Activated CD4-positive, alpha-beta memory T cell treated with anti-CD3 and anti-CD28 coated beads, Interleukin-2, amount 10 ng/mL, durations not matched to agents 7 days and 5 days (primary cell): ENCODE measurements at regions of chr6 and their contacts with region 1.

Region 1: DNA sequence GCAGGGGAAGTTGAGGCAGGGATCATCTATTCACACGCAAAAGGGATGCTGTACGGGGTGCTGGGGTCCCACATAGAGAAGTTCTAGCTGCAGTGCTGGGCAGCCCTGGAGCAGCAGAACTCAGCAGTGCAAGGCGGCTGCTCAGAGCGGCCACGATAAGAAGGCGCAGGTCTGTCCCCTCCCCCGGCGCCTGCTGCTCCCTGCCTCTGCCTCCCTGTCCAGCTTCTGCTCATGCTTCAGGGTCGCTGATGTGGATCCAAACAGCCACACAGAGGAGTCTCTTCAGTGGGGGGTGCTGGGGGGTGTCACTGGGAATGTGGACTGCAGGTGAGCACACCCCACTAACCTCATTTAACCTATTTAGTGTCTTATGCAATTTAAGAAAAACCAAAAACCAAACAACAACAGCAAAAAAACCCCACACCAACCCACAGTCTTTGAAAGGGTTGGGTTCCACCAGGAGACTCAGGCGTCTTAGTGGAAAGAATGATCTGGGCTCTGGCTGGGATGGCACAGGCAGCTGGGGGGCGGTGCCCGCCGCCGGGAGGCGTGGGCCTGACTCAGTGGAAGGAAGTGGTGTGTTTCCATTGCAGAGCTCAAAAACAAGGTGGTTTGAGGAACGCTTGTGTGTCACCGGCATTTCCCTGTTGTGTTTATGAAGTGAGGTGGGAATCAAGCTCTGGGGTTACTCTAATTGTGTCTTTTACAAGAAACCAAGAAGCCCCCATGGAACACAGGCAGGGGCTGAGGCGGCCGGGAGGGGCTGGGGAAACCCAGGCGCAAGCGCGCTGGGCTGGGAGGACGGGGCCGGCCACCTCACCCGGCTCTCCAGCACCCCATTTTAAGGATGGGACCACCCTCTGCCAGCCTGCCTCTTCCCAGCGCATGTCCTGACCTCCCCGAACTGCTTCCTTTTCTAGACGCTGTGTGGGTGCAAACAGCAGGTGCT is 55.1 kb downstream of the IRF4 start:
- DNase-seq: peak; percentile 92
- H3K4me3 Mint-ChIP-seq: peak overlapping the region; percentile 64
- H3K27ac Mint-ChIP-seq: peak overlapping the region; percentile 87
- H3K4me1 Mint-ChIP-seq: peaks cover 55% of the 10 kb centered on the region
- H3K27me3 Mint-ChIP-seq: peaks cover 12% of the 10 kb centered on the region

Region 2: DNA sequence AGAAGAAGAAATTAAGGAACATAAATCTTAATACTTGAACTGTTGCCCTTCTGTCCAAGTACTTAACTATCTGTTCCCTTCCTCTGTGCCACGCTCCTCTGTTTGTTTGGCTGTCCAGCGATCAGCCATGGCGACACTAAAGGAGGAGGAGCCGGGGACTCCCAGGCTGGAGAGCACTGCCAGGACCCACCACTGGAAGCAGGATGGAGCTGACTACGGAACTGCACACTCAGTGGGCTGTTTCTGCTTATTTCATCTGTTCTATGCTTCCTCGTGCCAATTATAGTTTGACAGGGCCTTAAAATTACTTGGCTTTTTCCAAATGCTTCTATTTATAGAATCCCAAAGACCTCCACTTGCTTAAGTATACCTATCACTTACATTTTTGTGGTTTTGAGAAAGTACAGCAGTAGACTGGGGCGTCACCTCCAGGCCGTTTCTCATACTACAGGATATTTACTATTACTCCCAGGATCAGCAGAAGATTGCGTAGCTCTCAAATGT is 38.0 kb before region 1 on chr6:
- CTCF ChIA-PET with region 1: interaction called, 3 read pairs
- POLR2A ChIA-PET with region 1: interaction called, 37 read pairs
- DNase-seq: no peak
- H3K4me3 Mint-ChIP-seq: no peak overlapping the region
- H3K27ac Mint-ChIP-seq: peak overlapping the region; percentile 36
- H3K4me1 Mint-ChIP-seq: peaks cover 66% of the 10 kb centered on the region
- H3K27me3 Mint-ChIP-seq: no peaks in the 10 kb centered on the region

Region 3: DNA sequence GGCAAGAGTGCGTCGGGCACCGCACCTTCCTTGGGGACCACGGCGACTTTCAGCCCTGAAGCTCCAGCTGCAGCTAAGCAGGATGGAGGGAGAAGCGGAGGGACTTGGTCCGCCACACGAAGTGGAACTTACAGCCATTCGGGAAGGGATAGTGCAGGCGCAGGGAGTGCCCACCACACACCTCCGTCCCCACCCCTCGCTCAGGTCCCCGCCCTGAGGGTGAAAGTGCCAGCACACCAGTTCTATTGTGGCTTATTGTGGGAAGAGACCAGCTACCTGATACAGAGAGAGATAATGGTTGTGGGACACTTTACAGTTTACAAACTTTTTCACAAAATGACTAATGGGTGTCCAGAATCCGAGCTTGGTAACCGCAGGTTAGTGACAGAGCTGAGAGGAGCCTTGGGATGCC is 21.0 kb after region 1 on chr6:
- CTCF ChIA-PET with region 1: interaction called, 6 read pairs
- POLR2A ChIA-PET with region 1: interaction called, 22 read pairs
- DNase-seq: peak; percentile 46
- H3K4me3 Mint-ChIP-seq: no peak overlapping the region
- H3K27ac Mint-ChIP-seq: no peak overlapping the region
- H3K4me1 Mint-ChIP-seq: peaks cover 43% of the 10 kb centered on the region
- H3K27me3 Mint-ChIP-seq: peaks cover 75% of the 10 kb centered on the region

Region 4: GRCh38 chr6:484086-484745 is 37.5 kb after region 1 on chr6:
- CTCF ChIA-PET with region 1: no interaction called
- POLR2A ChIA-PET with region 1: interaction called, 17 read pairs
- DNase-seq: no peak
- H3K4me3 Mint-ChIP-seq: no peak overlapping the region
- H3K27ac Mint-ChIP-seq: peak overlapping the region; percentile 55
- H3K4me1 Mint-ChIP-seq: peaks cover 43% of the 10 kb centered on the region
- H3K27me3 Mint-ChIP-seq: peaks cover 6% of the 10 kb centered on the region

Region 5: DNA sequence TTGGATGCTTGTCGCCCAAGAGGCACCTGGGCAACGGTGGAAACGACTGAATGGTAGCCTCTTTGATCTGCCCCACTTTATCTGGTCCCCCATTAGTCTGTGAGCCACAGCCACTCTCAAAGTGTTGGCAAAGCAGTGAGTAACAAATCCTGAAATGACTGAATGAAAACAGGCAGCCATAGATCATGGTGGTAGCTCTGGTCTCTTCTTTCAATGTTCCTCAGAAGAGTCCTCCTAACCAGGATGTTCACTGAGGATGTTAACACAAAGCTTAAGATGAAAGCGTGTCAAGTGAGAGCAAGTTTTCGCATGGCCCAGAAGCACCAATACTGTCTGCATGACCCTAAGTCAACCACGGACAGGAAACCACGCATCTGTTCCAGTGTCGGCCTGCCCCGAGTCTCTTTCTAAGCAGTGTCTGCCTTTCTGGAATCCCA is 52.1 kb after region 1 on chr6:
- CTCF ChIA-PET with region 1: no interaction called
- POLR2A ChIA-PET with region 1: interaction called, 24 read pairs
- DNase-seq: peak; percentile 72
- H3K4me3 Mint-ChIP-seq: peak overlapping the region; percentile 65
- H3K27ac Mint-ChIP-seq: peak overlapping the region; percentile 88
- H3K4me1 Mint-ChIP-seq: peaks cover 80% of the 10 kb centered on the region
- H3K27me3 Mint-ChIP-seq: no peaks in the 10 kb centered on the region

Region 6: GRCh38 chr6:650098-650497 is 203.4 kb after region 1 on chr6:
- CTCF ChIA-PET with region 1: no interaction called
- POLR2A ChIA-PET with region 1: no interaction called
- DNase-seq: no peak
- H3K4me3 Mint-ChIP-seq: no peak overlapping the region
- H3K27ac Mint-ChIP-seq: no peak overlapping the region
- H3K4me1 Mint-ChIP-seq: peaks cover 14% of the 10 kb centered on the region
- H3K27me3 Mint-ChIP-seq: no peaks in the 10 kb centered on the region